Posterior vena cava (tissue), 2 donors: ENCODE measurements at regions of chr11 and their contacts with region 1.

Region 1: GRCh38 chr11:1515082-1516060 is 28.8 kb upstream of the MOB2 start:
- DNase-seq: peak; percentile 95

Region 2: DNA sequence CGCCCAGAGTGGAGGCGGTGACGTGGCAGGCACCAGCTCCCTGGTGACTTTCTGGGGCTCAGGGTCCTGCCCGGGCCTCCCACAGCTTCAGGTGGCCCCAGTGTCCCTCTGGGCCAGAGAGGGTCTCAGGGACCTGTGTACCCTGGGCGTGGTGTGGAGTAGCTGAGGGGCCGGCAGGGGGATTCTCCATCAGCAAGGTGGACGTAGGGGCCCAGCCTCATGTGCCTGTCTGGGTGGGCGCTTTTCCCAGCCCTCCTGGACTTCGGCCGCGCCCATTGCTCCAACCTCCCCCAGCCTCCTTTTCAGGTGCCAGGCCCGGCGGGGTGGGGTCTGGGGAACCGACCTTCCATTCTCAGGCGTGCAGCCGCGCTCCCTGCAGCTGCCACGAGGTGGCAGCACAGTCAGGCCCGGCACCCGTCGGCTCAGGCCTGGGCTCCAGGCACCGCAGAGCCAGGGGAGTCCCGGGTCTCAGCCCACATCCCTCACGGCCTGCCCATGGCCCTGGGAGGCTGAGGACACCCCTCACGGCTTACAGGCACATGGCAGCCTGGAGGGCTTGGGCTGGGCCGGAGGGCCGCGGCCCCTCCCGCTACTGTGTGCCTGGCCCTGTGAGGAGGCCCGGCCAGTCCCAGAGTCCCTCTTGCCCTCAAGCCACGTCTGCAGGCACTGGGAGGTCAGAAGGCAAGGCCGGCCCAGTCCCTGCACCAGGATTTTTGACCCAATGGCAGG is 312.4 kb before region 1 on chr11:
- intact Hi-C with region 1: loop called (anchors 2 to 5 kb)
- DNase-seq: peak; percentile 87

Region 3: GRCh38 chr11:1252371-1253102 is 262.8 kb before region 1 on chr11:
- intact Hi-C with region 1: no loop called
- DNase-seq: no peak

Region 4: GRCh38 chr11:1453611-1454034 is 61.7 kb before region 1 on chr11:
- intact Hi-C with region 1: loop called in 1 of 2 experiments (anchors 5 kb)
- DNase-seq: no peak

Region 5: DNA sequence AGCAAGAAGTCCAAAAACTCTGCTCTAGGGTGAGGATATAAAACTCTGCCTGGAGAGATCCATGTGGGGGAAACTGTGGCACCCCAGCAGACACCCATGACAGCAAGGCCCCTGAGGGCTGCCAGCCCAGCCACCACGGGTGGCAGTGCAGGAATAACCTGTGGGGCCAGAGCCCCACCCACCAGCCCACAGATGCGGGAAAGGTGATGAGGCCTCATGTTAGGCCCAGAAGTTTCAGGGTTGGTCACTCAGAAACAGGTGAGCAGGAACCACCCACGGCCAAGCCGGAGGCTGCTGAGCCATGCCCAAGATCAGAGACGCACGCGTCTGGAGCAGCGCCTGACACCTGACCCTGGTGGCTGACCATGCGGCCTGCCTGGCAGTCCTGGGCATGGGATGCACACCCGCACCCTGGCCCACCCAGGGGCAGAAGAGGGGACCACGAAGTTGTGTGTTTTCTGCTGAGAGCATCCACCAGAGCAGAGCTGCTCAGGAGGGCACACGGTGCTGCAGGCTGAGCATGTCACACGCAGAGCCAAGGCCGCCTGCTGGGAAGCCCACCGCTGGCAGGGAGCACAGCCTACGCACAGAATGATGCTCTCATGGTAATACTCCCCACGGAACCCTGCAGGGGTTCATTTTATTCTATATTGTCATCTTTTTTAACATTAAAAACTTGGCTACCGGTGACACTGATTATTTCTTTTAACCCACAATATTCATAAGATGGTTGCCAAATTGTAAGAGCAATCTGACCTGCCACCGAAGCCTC is 15.5 kb after region 1 on chr11:
- intact Hi-C with region 1: no loop called
- DNase-seq: no peak

Region 6: DNA sequence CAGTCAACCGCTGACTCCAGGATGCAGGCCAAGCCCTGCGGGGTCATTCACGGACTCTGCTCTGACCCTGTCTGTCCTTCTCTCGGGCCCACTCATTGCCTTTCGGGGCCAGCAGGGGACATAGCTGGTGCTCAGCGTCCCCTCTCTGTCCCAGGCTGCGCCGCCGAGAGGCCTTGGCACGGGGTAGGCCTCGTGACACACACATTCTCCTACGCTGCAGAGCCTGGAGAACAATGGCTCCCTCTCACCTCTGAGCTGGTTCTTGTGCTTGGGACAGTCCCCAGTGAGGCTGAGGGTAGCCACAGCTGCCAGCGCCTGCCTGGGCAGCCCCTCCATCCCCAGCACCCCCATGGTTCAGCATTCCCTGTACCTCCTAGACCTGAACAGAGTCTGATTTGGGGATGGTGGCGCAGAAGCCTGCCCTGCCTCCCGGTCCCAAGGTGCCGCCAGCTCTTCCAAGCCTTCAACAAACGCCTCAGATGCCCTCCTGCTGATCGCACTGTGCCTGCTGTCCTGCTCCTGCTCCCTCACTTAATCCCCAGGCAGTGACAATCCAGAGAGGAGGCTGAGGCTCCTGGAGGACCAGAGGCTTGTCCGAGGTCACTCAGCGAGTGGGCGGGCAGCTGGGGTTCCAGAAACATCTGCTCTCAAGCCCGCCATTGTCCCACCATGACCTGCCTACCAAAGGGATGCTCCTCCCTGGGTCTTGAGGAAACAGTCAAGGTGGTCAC is 26.3 kb after region 1 on chr11:
- intact Hi-C with region 1: no loop called
- DNase-seq: no peak

Region 7: GRCh38 chr11:2213384-2213842 is 698.0 kb after region 1 on chr11:
- intact Hi-C with region 1: no loop called
- DNase-seq: peak; percentile 58